ENCODE measurements at regions of chr1 and their contacts with region 1.

Region 1: GRCh38 chr1:30816211-30817076 is 58.9 kb upstream of the LAPTM5 start:
- DNase-seq: peak; percentile 69 to 82
- H3K4me3 ChIP-seq: no peak overlapping the region
- H3K27ac ChIP-seq: no peak overlapping the region
- H3K4me1 ChIP-seq: peaks cover 12% of the 10 kb centered on the region
- H3K27me3 ChIP-seq: no peaks in the 10 kb centered on the region
- CTCF ChIP-seq: no peak

Region 2: GRCh38 chr1:31174556-31174955 is 358.1 kb after region 1 on chr1:
- CTCF ChIA-PET with region 1: no interaction called
- POLR2A ChIA-PET with region 1: interaction called, 11 read pairs
- intact Hi-C with region 1: no loop called
- DNase-seq: no peak
- H3K4me3 ChIP-seq: no peak overlapping the region
- H3K27ac ChIP-seq: no peak overlapping the region
- H3K4me1 ChIP-seq: peaks cover 11% of the 10 kb centered on the region
- H3K27me3 ChIP-seq: no peaks in the 10 kb centered on the region
- CTCF ChIP-seq: no peak

Region 3: DNA sequence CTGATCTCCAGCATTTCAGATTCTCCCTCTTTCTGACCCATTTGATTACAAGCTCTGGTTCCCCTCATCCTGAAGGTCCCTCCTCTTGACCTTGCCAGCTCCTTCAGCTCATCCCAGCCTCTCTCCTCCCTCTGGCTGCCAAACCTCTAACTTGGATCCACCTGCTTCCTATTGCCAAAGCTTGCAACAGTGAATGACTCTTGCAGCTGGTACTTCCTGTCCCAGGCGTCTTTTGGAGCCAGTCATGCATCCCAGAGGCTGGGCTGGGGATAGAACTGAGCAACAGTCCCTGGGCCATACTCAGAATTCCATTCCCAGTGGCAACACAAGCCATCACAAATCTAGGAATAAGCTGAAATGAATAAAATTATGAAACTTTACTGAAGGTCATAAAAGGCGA is 1027.1 kb after region 1 on chr1:
- CTCF ChIA-PET with region 1: no interaction called
- POLR2A ChIA-PET with region 1: interaction called, 16 read pairs
- intact Hi-C with region 1: no loop called
- DNase-seq: peak; percentile 9 to 53
- H3K4me3 ChIP-seq: no peak overlapping the region
- H3K27ac ChIP-seq: no peak overlapping the region
- H3K4me1 ChIP-seq: no peaks in the 10 kb centered on the region
- H3K27me3 ChIP-seq: no peaks in the 10 kb centered on the region
- CTCF ChIP-seq: no peak

Measured in PC-9 (cell line).